GM12878 (cell line): ENCODE measurements at regions of chr21 and their contacts with region 1.

Region 1: GRCh38 chr21:14533504-14534428 is 12.3 kb downstream of the SAMSN1 start:
- DNase-seq: peak; percentile 56
- ATAC-seq: peak; percentile 89
- H3K4me3 ChIP-seq: peak overlapping the region; percentile 61; the same call in 1 of the 2 replicates
- H3K27ac ChIP-seq: peak overlapping the region; percentile 78
- H3K4me1 ChIP-seq: peaks cover 15% of the 10 kb centered on the region; the same call in 1 of the 2 replicates
- H3K27me3 ChIP-seq: no peaks in the 10 kb centered on the region
- CTCF ChIP-seq: no peak
- EP300 ChIP-seq: peak; percentile 92 to 97
- POLR2A ChIP-seq: no peak
- RAD21 ChIP-seq: no peak

Region 2: DNA sequence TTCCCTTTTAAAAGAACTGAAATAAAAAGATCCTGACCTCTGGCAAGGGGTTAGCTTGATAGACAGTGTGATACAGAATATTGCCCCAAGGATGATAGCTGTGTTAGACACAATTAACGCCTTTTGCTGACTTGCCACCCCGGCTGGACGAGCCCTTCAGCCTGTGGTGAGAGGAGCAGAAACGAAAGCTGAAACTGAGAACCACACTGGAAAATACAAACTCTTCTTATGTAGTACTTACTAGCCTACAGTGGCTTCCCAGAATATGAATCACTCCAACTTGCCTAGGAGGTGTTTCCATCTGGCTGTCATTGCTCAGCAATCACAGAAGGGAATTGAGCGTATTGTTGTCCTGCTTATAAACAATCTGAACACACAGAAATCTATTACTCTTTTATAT is 10.5 kb before region 1 on chr21:
- CTCF ChIA-PET with region 1: interaction called, 9 read pairs
- POLR2A ChIA-PET with region 1: interaction called, 6 read pairs
- RAD21 ChIA-PET with region 1: interaction called, 24 read pairs
- SMC1A ChIA-PET with region 1: interaction called, 120 read pairs
- in situ Hi-C with region 1: no loop called
- intact Hi-C with region 1: no loop called
- DNase-seq: no peak
- ATAC-seq: peak; percentile 87
- H3K4me3 ChIP-seq: peak overlapping the region; percentile 29; the same call in 1 of the 2 replicates
- H3K27ac ChIP-seq: peak overlapping the region; percentile 50
- H3K4me1 ChIP-seq: peaks cover 32% of the 10 kb centered on the region
- H3K27me3 ChIP-seq: no peaks in the 10 kb centered on the region
- CTCF ChIP-seq: no peak
- EP300 ChIP-seq: no peak; a peak in 1 of 4 replicates
- POLR2A ChIP-seq: no peak
- RAD21 ChIP-seq: no peak

Region 3: GRCh38 chr21:14545906-14546480 is 12.2 kb after region 1 on chr21 and contains the start of gene SAMSN1:
- CTCF ChIA-PET with region 1: interaction called, 4 read pairs
- POLR2A ChIA-PET with region 1: interaction called, 4 read pairs
- RAD21 ChIA-PET with region 1: interaction called, 29 read pairs
- SMC1A ChIA-PET with region 1: interaction called, 120 read pairs
- in situ Hi-C with region 1: no loop called
- intact Hi-C with region 1: no loop called
- DNase-seq: peak; percentile 78
- ATAC-seq: peak; percentile 86
- H3K4me3 ChIP-seq: peak within 1 kb of the TSS; percentile 76
- H3K27ac ChIP-seq: peak within 1 kb of the TSS; percentile 87
- H3K4me1 ChIP-seq: peaks cover 12% of the 10 kb centered on the region; the same call in 1 of the 2 replicates
- H3K27me3 ChIP-seq: no peaks in the 10 kb centered on the region
- CTCF ChIP-seq: no peak
- EP300 ChIP-seq: peak in 1 of 2 experiments; percentile 66; a peak in 1 of 4 replicates
- POLR2A ChIP-seq: peak; percentile 83
- RAD21 ChIP-seq: 0 out of 2 replicates have a peak, but pooled peaks have one; percentile 22
- polyA plus RNA-seq, gene SAMSN1: 90.4 to 102 TPM

Region 4: DNA sequence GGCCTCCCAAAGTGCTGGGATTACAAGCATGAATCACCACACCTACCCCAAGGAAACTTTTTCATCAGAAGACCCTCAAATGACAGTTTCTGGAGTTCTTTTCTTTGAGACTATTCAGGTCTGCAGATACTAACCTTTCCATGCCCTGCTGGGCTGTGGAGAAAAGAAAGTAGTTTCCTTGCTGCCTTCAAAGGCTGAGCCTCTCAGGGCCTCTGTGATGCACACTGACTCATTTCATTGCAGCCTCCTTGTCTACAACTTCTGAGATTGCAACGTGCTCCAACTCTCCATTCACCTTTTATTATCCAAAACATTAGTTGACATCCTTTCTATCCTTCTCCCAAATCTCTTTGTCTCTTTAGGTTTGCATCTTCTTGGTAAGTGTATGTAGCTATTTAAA is 21.2 kb after region 1 on chr21:
- CTCF ChIA-PET with region 1: interaction called, 4 read pairs
- POLR2A ChIA-PET with region 1: interaction called, 4 read pairs
- RAD21 ChIA-PET with region 1: interaction called, 3 read pairs
- SMC1A ChIA-PET with region 1: interaction called, 15 read pairs
- in situ Hi-C with region 1: no loop called
- intact Hi-C with region 1: no loop called
- DNase-seq: no peak
- ATAC-seq: peak; percentile 28; the same call in 1 of the 3 replicates
- H3K4me3 ChIP-seq: no peak overlapping the region
- H3K27ac ChIP-seq: no peak overlapping the region
- H3K4me1 ChIP-seq: peaks cover 19% of the 10 kb centered on the region
- H3K27me3 ChIP-seq: no peaks in the 10 kb centered on the region
- CTCF ChIP-seq: no peak
- EP300 ChIP-seq: no peak
- POLR2A ChIP-seq: no peak
- RAD21 ChIP-seq: no peak

Region 5: GRCh38 chr21:14591882-14592281 is 58.1 kb after region 1 on chr21:
- CTCF ChIA-PET with region 1: interaction called, 3 read pairs
- POLR2A ChIA-PET with region 1: no interaction called
- RAD21 ChIA-PET with region 1: interaction called, 5 read pairs
- SMC1A ChIA-PET with region 1: interaction called, 10 read pairs
- in situ Hi-C with region 1: no loop called
- intact Hi-C with region 1: loop called (anchors 5 kb)
- DNase-seq: no peak
- ATAC-seq: peak; percentile 79
- H3K4me3 ChIP-seq: no peak overlapping the region
- H3K27ac ChIP-seq: no peak overlapping the region
- H3K4me1 ChIP-seq: peaks cover 9% of the 10 kb centered on the region; the same call in 1 of the 2 replicates
- H3K27me3 ChIP-seq: no peaks in the 10 kb centered on the region
- CTCF ChIP-seq: no peak
- EP300 ChIP-seq: peak in 1 of 2 experiments; percentile 16; a peak in 2 of 4 replicates
- POLR2A ChIP-seq: no peak
- RAD21 ChIP-seq: no peak

Region 6: GRCh38 chr21:14762734-14763694 is 229.2 kb after region 1 on chr21:
- CTCF ChIA-PET with region 1: no interaction called
- POLR2A ChIA-PET with region 1: no interaction called
- RAD21 ChIA-PET with region 1: no interaction called
- SMC1A ChIA-PET with region 1: no interaction called
- in situ Hi-C with region 1: no loop called
- intact Hi-C with region 1: loop called (anchors 5 kb)
- DNase-seq: peak; percentile 82
- ATAC-seq: peak; percentile 97
- H3K4me3 ChIP-seq: peak overlapping the region; percentile 59
- H3K27ac ChIP-seq: peak overlapping the region; percentile 87
- H3K4me1 ChIP-seq: peaks cover 10% of the 10 kb centered on the region
- H3K27me3 ChIP-seq: no peaks in the 10 kb centered on the region
- CTCF ChIP-seq: no peak
- EP300 ChIP-seq: peak; percentile 89 to 98
- POLR2A ChIP-seq: no peak
- RAD21 ChIP-seq: 0 out of 2 replicates have a peak, but pooled peaks have one; percentile 24